Activated T-helper 2 cell treated with anti-CD3 and anti-CD28 coated beads, Interferon-gamma antibody, Interleukin-2, Interleukin-4, amounts not matched to agents 10 μg/mL and 5 μg/mL and 100 μg/mL, durations not matched to agents 14 hours and 24 hours and 36 hours (primary cell): ENCODE measurements at regions of chr2 and their contacts with region 1.

Region 1: DNA sequence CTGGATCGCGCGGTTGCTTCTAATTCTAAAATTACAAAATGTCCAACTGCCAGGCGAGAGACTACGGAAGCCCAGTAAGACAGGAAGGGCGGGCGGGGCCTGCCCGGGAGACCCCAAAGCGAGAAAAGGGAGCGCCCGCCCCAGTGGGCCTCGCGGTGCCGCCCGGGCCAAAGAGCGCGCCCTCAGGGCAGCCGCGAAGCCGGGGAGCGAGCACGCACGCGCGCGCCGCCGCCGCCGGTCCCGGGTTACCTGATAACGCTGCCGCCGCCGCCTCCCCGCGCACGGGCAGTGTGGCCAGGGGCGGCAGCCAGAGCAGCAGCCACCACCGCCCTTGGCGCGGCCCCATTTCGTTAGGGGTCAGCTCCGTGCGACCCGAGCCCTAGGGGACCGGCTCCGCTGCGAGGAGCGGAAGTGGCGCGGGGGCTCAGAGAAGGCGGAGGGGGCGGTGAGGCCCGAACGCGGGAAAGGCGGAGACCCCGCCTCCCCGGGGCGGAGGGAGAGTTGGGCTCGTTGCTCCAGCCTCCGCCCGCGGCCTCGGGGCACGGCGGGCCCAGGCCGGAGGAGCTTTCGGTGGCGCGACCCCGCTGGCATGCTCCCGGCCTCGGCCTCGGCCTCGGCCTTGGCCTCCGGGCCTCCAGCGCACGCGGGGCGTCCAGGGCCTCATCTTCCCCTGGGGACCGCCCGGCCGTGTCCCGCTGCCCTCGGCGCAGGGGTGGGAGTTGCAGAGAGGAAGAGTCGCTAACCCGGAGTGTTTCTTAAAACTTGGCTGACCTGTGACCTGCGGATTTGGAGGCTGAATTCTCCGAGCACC is at the start of gene NEMP2:
- DNase-seq: peak; percentile 84
- H3K4me3 Mint-ChIP-seq: peak within 1 kb of the TSS; percentile 95
- H3K27ac Mint-ChIP-seq: peak within 1 kb of the TSS; percentile 98
- H3K4me1 Mint-ChIP-seq: peaks cover 48% of the 10 kb centered on the region
- H3K27me3 Mint-ChIP-seq: no peaks in the 10 kb centered on the region
- total RNA-seq, gene NEMP2: 15.2 and 15.5 TPM in 2 replicates

Region 2: DNA sequence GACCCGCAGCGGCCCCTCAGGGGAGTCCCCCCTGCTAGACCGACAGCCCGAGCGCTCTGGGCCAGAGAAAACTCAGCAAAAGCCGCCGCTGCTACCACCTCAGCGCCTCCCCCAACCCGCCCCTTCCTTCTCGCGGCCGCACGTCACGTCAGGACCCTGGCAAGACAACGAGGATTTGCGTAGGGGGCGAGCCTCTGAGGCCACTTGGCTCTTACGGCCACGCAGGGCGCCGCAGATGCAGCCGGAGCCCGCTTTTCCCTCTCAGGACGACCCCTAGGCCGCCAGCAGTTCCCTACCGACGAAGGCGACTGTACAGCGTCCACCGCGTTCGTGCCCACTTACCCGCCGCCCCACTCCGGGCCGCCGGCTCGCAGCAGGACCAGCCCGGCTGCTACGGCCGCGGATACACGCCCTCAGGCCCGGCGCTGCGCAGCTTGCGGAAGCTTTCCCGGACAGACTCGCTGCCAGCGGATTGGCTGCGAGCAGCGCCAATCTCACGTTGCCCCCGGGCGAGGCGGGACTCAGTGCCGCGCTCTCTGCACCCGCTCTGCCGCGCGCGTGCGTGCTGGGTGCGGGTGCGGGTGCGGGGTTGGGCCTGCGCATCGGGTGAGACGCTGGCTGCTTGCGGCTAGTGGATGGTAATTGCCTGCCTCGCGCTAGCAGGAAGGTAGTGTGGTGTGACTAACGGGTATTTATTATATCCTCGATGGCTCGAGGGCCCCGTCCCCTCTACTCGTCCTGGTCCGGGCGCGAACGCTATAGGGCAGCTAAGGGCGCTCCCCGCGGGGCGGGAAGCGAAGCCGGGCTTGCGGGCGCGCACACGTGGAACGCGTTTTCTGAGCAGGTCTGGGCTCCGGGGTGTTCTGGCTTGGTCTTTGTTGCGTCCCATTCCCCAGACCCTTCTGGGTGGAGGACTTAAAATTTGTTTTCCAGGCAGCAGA is 750.3 kb before region 1 on chr2 and contains the starts of genes ORMDL1 and PMS1:
- intact Hi-C with region 1: loop called (anchors 10 kb)
- DNase-seq: peak; percentile 94
- H3K4me3 Mint-ChIP-seq: peak within 1 kb of the TSS; percentile 90
- H3K27ac Mint-ChIP-seq: peak within 1 kb of the TSS; percentile 90
- H3K4me1 Mint-ChIP-seq: peaks cover 45% of the 10 kb centered on the region
- H3K27me3 Mint-ChIP-seq: no peaks in the 10 kb centered on the region
- total RNA-seq, gene ORMDL1: 68.8 and 72.1 TPM in 2 replicates
- total RNA-seq, gene PMS1: 57.0 and 58.7 TPM in 2 replicates

Region 3: DNA sequence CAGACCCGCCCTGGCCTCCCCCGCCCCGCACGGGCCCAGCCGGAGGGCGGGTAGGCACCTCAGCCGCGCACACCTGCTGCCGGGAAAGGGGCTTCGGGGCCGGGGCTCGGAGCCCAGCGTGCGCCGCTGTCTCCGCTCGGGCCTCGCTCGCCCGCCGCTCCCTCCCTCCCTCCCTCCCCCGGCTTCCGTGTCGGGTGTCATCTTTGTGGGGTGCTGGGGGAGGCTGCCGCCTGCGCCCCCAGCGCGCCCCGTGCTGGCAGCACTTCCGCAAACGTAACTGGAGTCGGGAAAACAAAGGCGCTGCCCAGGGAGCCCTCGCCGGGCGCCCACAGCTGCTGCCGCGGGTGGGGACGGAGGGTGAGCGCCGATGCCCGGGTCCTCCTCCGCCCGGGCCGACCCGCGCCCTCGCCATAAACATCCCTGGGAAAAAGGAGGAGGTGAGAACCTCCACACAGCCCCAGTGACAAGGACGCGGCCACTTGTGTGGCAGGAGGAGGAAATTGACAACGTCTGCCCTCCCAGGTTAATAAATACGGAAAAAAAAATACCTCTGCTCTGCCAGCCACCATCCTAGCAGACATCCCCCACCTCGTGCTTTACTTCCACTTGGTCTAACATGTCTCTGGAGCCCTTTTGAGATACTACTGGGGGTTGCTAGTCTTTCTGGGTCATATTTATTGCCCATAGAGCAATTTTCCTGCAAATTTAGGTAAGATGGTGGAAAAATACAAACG is 125.8 kb before region 1 on chr2:
- intact Hi-C with region 1: loop called (anchors 1 kb)
- DNase-seq: peak; percentile 61
- H3K4me3 Mint-ChIP-seq: peak overlapping the region; percentile 86
- H3K27ac Mint-ChIP-seq: peak overlapping the region; percentile 91
- H3K4me1 Mint-ChIP-seq: peaks cover 36% of the 10 kb centered on the region
- H3K27me3 Mint-ChIP-seq: no peaks in the 10 kb centered on the region

Region 4: DNA sequence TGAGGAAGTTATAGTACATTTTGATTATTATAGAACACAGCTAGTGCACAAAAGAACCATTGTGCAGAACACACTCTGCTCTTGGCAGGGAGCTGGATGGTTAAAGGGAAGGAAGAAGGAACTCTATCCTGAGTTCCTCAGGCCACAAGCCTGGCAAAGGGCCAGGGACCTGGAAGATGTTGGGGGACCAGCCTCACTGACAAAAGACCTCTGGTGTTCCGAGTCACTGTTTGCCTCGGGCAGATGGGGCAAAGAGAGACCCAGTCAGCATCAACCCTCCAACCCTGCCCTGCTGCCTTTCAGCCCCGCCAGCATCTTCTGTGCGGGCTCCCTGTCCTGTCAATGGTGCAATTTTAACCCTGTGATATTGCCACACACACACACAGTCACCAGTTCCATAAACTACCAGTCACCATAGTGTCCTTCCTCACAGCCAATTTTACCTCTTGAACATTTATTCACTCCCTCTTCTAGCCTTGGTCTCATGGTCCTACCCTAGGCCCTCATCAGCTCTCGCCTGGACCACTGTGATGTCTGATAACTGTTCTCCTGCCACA is 21.9 kb before region 1 on chr2:
- intact Hi-C with region 1: no loop called
- DNase-seq: no peak
- H3K4me3 Mint-ChIP-seq: no peak overlapping the region
- H3K27ac Mint-ChIP-seq: no peak overlapping the region
- H3K4me1 Mint-ChIP-seq: peaks cover 20% of the 10 kb centered on the region
- H3K27me3 Mint-ChIP-seq: no peaks in the 10 kb centered on the region

Region 5: GRCh38 chr2:190551928-190552327 is 17.4 kb after region 1 on chr2:
- intact Hi-C with region 1: loop called (anchors 2 kb)
- DNase-seq: no peak
- H3K4me3 Mint-ChIP-seq: no peak overlapping the region
- H3K27ac Mint-ChIP-seq: no peak overlapping the region
- H3K4me1 Mint-ChIP-seq: peaks cover 11% of the 10 kb centered on the region
- H3K27me3 Mint-ChIP-seq: no peaks in the 10 kb centered on the region

Region 6: GRCh38 chr2:190679813-190680591 is 145.5 kb after region 1 on chr2:
- intact Hi-C with region 1: loop called (anchors 2 kb)
- DNase-seq: peak; percentile 29
- H3K4me3 Mint-ChIP-seq: peak overlapping the region; percentile 51
- H3K27ac Mint-ChIP-seq: peak overlapping the region; percentile 92
- H3K4me1 Mint-ChIP-seq: peaks cover 45% of the 10 kb centered on the region
- H3K27me3 Mint-ChIP-seq: no peaks in the 10 kb centered on the region

Region 7: DNA sequence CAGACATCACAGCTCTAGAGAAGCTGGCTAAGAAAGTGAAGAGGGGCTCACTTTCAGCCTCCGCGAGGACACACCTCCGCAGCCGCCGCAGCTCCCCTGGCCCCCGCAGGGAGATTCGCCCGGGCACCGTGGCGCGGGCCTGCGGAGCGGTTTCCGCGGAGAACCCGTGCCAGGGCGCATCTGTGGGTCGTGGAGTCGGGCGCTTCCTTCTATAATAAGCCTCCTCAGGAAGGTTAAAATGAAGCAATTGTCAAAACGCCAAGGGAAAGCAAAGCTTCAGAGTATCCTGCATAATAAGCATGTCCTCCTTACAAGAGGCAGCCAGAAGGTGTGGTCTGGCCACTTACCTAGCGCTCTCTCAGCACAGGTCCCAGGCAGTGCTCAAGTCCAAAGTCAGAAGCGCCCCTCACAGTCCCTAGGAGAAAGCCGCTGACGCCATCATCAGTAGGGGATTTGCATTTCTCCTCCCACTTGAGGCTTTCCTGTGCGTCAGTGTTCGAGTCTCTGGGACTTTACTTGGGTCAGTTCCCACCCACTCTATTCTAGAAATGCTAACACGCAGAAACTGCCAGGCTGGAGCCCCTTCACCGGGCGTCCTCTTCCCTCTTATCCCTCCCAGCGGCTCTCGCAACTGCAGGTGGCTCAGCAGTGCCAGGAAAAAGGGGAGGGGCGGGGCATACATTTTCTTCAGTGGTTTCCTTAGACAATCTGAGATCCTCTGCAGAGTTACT is 616.2 kb after region 1 on chr2 and contains the start of gene STAT4:
- intact Hi-C with region 1: loop called (anchors 5 kb)
- DNase-seq: peak; percentile 76
- H3K4me3 Mint-ChIP-seq: peak within 1 kb of the TSS; percentile 95
- H3K27ac Mint-ChIP-seq: peak within 1 kb of the TSS; percentile 96
- H3K4me1 Mint-ChIP-seq: peaks cover 71% of the 10 kb centered on the region
- H3K27me3 Mint-ChIP-seq: no peaks in the 10 kb centered on the region
- total RNA-seq, gene STAT4: 92.2 and 96.9 TPM in 2 replicates